ENCODE measurements at regions of chr5 and their contacts with region 1.

Region 1: DNA sequence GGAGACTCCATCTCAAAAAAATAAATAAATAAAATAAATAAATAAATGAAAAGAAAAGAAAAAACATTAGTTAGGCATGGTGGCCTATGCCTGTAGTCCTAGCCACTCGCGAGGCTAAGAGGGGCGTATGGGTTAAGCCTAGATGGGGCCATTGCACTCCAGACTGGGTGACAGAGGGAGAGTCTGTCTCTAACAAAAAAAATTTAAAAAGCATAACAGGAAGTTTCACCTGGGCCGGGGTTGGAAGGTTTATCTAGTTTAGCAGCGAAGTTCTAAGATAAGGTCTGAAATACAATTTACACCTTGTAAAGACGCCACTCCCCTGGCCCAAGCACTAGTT is 18.0 kb downstream of the ZMAT2 start:
- DNase-seq: no peak
- ATAC-seq: no peak
- H3K4me3 ChIP-seq: peak overlapping the region; percentile 68
- H3K27ac ChIP-seq: peak overlapping the region; percentile 74
- H3K4me1 ChIP-seq: no peaks in the 10 kb centered on the region
- H3K27me3 ChIP-seq: no peaks in the 10 kb centered on the region
- CTCF ChIP-seq: no peak

Region 2: DNA sequence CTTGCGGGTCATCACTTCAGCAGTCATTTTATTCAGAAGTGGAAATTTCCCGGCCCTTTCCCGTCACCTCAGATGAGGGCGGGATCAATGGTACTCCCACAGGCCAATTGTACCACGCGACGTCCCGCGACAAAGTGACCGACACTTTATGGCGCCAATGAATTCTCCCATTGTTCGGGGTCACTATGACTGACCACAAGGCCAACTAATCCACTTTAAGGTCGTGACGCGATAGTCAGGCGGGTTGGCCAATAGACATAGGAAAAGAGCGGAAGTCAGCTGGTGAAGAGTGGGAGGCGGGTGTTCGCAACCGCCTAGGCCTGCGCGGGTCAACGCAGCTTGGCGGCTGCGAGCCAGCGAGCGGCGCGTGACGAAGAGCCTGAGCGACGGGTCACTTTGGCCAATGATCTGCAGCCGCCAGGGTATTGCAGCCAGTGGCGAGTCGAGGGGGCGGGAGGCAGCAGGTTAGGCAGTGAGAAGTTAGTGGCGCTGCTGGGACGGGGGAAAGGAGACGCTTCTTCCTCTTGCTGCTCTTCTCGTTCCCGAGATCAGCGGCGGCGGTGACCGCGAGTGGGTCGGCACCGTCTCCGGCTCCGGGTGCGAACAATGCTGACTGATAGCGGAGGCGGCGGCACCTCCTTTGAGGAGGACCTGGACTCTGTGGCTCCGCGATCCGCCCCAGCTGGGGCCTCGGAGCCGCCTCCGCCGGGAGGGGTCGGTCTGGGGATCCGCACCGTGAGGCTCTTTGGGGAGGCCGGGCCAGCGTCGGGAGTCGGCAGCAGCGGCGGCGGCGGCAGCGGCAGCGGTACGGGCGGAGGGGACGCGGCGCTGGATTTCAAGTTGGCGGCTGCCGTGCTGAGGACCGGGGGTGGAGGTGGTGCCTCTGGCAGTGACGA is 316.6 kb before region 1 on chr5 and contains the start of gene ANKHD1:
- CTCF ChIA-PET with region 1: no interaction called
- POLR2A ChIA-PET with region 1: no interaction called
- intact Hi-C with region 1: loop called (anchors 2 kb)
- DNase-seq: peak; percentile 100
- ATAC-seq: peak; percentile 73
- H3K4me3 ChIP-seq: peak within 1 kb of the TSS; percentile 97
- H3K27ac ChIP-seq: peak within 1 kb of the TSS; percentile 79
- H3K4me1 ChIP-seq: peaks cover 30% of the 10 kb centered on the region
- H3K27me3 ChIP-seq: no peaks in the 10 kb centered on the region
- CTCF ChIP-seq: no peak
- total RNA-seq, gene ANKHD1: 64.6 and 81.1 TPM in 2 replicates

Region 3: GRCh38 chr5:140664359-140665119 is 53.7 kb before region 1 on chr5 and contains the start of gene WDR55:
- CTCF ChIA-PET with region 1: no interaction called
- POLR2A ChIA-PET with region 1: no interaction called
- intact Hi-C with region 1: loop called (anchors 1 kb)
- DNase-seq: peak; percentile 96
- ATAC-seq: peak; percentile 95
- H3K4me3 ChIP-seq: peak within 1 kb of the TSS; percentile 95
- H3K27ac ChIP-seq: peak within 1 kb of the TSS; percentile 87
- H3K4me1 ChIP-seq: peaks cover 20% of the 10 kb centered on the region
- H3K27me3 ChIP-seq: no peaks in the 10 kb centered on the region
- CTCF ChIP-seq: no peak
- total RNA-seq, gene WDR55: 21.2 and 27.2 TPM in 2 replicates

Region 4: DNA sequence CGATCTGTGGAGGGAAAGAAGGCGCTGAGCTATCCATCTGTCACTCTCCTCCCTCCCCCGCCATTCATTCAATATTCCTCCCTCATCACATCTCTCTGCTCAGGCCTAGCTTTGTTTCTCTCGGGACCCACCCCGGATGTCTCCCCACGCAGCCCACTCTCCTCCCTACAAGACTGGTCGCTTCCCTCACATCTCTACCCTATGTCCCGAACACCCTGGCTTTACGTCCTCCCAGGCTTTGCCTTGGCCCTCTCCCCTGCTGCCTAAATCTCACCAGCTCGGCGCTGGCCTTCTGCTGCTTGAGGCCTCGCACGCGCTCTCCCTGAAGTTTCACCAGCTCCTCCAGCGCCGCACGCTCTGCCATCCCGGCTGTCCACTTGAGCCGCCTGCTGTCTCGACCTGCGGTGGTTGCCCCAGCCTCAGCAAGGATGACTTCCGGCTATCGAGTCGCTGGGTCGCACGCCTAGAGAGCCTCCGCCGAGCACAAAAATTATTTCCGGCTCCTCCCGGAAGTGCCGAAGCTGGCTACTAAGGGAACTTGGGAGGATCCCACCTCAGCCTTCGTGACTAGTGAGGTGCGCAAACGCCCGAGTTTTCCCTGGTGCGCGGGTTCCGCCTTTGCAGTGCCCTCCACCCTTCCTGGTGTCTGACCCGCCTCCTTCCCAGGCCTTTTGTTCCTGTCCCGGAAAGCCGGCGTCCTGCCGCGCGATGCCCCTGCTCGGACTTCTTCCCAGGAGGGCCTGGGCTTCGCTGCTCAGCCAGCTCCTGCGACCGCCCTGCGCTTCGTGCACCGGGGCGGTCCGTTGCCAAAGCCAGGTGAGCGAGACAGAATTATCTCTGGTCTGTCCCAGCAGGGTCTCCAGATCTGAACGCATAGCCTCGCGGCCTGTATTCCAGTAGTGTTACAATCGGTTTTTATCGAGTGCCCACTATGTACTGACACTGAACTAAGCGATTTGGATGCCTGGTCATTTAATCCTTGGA is 27.0 kb before region 1 on chr5 and contains the starts of genes HARS1 and HARS2:
- CTCF ChIA-PET with region 1: interaction called, 3 read pairs
- POLR2A ChIA-PET with region 1: no interaction called
- intact Hi-C with region 1: loop called (anchors 1 kb)
- DNase-seq: peak; percentile 94
- ATAC-seq: peak; percentile 94
- H3K4me3 ChIP-seq: peak within 1 kb of the TSS; percentile 92
- H3K27ac ChIP-seq: peak within 1 kb of the TSS; percentile 71
- H3K4me1 ChIP-seq: peaks cover 7% of the 10 kb centered on the region; the same call in 1 of the 2 replicates
- H3K27me3 ChIP-seq: no peaks in the 10 kb centered on the region
- CTCF ChIP-seq: no peak
- total RNA-seq, gene HARS1: 76.1 and 87.1 TPM in 2 replicates
- total RNA-seq, gene HARS2: 23.3 and 29.7 TPM in 2 replicates